ENCODE measurements at regions of chr5 and their contacts with region 1.

Region 1: GRCh38 chr5:133376986-133377385 is 235.4 kb downstream of the FSTL4 start:
- DNase-seq: no peak
- H3K4me3 ChIP-seq: no peak overlapping the region
- CTCF ChIP-seq: no peak

Region 2: DNA sequence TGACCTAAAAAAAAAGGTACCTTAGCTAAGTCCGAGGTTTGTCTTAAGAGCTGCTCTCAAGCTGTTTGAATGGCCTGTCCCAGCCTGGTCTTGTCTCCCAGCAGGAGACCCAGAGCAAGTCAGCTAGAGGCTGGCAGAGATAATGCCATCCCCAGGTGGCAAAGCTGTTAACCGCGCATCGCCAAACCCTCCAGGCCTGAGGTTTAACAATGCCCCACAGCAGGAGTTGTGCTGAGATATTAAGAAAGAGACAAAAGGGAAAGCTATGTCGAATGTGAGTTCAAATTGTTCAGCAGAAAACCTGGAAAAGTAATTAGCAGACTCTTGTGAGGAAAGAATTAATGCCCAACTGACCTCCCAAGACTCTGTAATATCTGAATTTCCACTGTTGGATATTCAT is 48.2 kb after region 1 on chr5:
- in situ Hi-C with region 1: loop called (anchors 5 kb)
- DNase-seq: no peak
- H3K4me3 ChIP-seq: no peak overlapping the region
- CTCF ChIP-seq: no peak